H1 (cell line): ENCODE measurements at regions of chr1 and their contacts with region 1.

Region 1: GRCh38 chr1:194117582-194117981 is 931.2 kb upstream of the B3GALT2 start:
- DNase-seq: peak; percentile 60 to 79
- H3K4me3 ChIP-seq: no peak overlapping the region
- H3K27ac ChIP-seq: no peak overlapping the region
- H3K4me1 ChIP-seq: 0 out of 7 replicates have a peak, but pooled peaks cover 0 to 2% (median 0%) of the 10 kb centered on the region in 4 experiments
- H3K27me3 ChIP-seq: no peaks in the 10 kb centered on the region
- CTCF ChIP-seq: peak; percentile 73 to 86 (median 78)
- EP300 ChIP-seq: no peak
- POLR2A ChIP-seq: no peak
- RAD21 ChIP-seq: peak; percentile 48 to 63

Region 2: GRCh38 chr1:194004146-194004545 is 113.4 kb before region 1 on chr1:
- CTCF ChIA-PET with region 1: no interaction called
- POLR2A ChIA-PET with region 1: no interaction called
- DNase-seq: no peak
- H3K4me3 ChIP-seq: no peak overlapping the region
- H3K27ac ChIP-seq: no peak overlapping the region
- H3K4me1 ChIP-seq: no peaks in the 10 kb centered on the region
- H3K27me3 ChIP-seq: no peaks in the 10 kb centered on the region
- CTCF ChIP-seq: no peak
- EP300 ChIP-seq: no peak
- POLR2A ChIP-seq: no peak
- RAD21 ChIP-seq: no peak

Region 3: DNA sequence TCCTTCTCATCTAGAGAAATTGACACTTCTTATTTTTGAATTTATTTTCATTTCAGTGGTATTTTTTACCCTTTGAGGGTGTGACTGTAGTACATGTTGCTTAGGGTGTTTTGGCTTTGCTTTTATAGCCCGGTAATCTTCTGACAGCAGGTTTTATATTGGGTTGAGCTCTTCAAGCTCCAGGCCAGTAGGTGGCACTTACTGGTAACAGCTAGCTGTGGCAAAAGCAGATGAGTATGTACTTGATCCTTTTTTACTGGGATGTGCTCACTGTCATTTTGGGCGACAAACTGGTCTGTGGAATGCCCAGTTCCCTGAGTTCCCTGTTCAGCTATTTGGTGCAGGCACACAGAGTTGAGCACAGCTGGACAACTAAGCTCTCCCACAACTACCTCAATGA is 15.0 kb before region 1 on chr1:
- CTCF ChIA-PET with region 1: interaction called, 14 read pairs
- POLR2A ChIA-PET with region 1: no interaction called
- DNase-seq: no peak
- H3K4me3 ChIP-seq: no peak overlapping the region
- H3K27ac ChIP-seq: no peak overlapping the region
- H3K4me1 ChIP-seq: no peaks in the 10 kb centered on the region
- H3K27me3 ChIP-seq: no peaks in the 10 kb centered on the region
- CTCF ChIP-seq: peak in 2 of 3 experiments; percentile 38 to 52; a peak in 3 of 4 replicates
- EP300 ChIP-seq: no peak
- POLR2A ChIP-seq: no peak
- RAD21 ChIP-seq: peak; percentile 41 to 66; a peak in 3 of 4 replicates